H1 (cell line): ENCODE measurements at regions of chr10 and their contacts with region 1.

Region 1: GRCh38 chr10:132023092-132023811 is 41.5 kb upstream of the BNIP3 start:
- DNase-seq: peak; percentile 73 to 94
- H3K4me3 ChIP-seq: no peak overlapping the region
- H3K27ac ChIP-seq: no peak overlapping the region
- H3K4me1 ChIP-seq: peaks cover 2 to 8% (median 3%) of the 10 kb centered on the region in 4 experiments; a peak in 5 of 7 replicates
- H3K27me3 ChIP-seq: peaks cover 0 to 8% (median 1%) of the 10 kb centered on the region in 4 experiments; a peak in 3 of 7 replicates
- CTCF ChIP-seq: peak; percentile 85 to 93 (median 89)
- EP300 ChIP-seq: no peak
- POLR2A ChIP-seq: no peak
- RAD21 ChIP-seq: peak; percentile 93 to 95

Region 2: DNA sequence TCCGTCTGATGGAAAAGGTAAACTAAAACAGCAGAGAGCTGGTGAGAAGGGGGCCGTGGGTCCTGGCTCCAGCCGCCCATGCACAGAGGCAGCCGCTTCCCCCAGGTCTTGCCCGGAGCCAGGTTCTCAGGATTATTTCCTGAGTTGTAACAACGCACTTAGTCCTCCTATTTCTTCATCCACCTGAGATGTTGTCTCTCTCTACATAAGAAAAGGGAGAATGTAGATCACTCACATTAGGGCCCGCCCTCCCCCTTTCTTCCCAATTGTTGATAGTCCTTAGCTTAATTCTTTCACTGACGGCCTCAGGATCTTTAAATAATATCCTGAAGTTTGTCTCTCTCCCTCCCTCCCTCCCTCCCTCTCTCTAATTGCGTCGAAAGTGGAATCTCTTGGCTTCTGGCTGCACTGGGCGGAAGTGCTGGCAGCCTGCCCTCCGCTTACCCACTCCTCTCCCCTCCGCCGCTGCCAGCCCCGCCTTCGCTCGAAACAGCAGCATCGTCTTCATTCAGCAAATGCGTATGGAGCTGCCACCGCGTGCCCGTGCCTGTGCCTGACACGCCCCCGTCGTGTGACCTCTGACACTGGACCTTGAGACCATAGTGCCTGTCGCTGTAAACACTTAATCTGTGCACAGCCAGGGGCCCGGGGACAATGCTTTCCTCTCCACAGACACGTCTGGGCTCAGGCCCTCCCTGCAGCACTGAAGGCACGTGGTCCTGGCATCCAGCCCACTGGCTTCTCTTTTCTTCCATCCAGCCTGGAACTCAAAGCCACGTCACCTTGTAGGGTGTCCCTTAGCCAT is 297.0 kb before region 1 on chr10:
- CTCF ChIA-PET with region 1: no interaction called
- POLR2A ChIA-PET with region 1: no interaction called
- DNase-seq: no peak
- H3K4me3 ChIP-seq: no peak overlapping the region
- H3K27ac ChIP-seq: no peak overlapping the region
- H3K4me1 ChIP-seq: peaks cover 0 to 25% (median 10%) of the 10 kb centered on the region in 4 experiments; a peak in 6 of 7 replicates
- H3K27me3 ChIP-seq: peaks cover 0 to 13% (median 9%) of the 10 kb centered on the region in 4 experiments; a peak in 4 of 7 replicates
- CTCF ChIP-seq: no peak
- EP300 ChIP-seq: no peak
- POLR2A ChIP-seq: no peak
- RAD21 ChIP-seq: no peak

Region 3: DNA sequence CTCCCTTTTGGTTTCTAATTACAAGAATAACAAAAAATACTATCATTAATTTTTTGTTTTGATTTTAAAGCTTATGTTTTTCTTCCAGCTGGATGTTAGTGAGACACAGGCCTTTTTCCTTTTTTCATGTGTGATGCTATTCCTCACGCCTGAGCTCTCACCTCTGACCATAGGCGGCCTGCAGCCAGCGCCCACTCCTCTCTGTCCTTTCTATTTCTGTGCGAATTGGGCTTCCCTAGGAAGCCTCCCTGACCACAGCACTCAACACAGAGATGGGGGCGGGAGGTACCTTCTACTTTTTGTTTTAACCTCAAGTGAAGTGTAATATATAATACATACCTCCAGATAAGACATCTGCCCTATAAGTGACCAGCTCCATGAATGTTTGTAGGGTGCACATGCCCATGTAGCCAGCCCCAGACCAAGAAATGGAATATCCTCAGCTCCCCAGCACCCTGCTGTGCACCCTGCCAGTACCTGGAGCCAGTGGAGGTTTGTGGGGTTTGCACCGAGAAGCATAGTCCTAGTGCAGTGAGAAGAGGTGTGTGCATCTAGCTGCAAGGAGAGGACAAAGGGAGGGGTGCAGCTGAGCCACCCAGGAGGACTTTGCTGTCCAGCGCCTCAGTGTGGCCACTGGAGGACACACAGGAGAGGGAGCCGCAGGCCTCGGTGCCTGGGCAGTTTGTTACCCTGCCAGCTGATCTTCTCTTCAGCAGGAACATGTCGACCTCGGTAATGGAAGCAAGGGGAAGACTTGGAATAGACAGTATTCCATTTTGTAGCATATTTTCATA is 80.0 kb before region 1 on chr10:
- CTCF ChIA-PET with region 1: interaction called, 28 read pairs
- POLR2A ChIA-PET with region 1: no interaction called
- DNase-seq: peak; percentile 29 to 66
- H3K4me3 ChIP-seq: no peak overlapping the region
- H3K27ac ChIP-seq: no peak overlapping the region
- H3K4me1 ChIP-seq: no peaks in the 10 kb centered on the region; a peak in 2 of 7 replicates
- H3K27me3 ChIP-seq: no peaks in the 10 kb centered on the region
- CTCF ChIP-seq: peak; percentile 82 to 93 (median 90)
- EP300 ChIP-seq: no peak
- POLR2A ChIP-seq: no peak
- RAD21 ChIP-seq: peak; percentile 70 to 75

Region 4: DNA sequence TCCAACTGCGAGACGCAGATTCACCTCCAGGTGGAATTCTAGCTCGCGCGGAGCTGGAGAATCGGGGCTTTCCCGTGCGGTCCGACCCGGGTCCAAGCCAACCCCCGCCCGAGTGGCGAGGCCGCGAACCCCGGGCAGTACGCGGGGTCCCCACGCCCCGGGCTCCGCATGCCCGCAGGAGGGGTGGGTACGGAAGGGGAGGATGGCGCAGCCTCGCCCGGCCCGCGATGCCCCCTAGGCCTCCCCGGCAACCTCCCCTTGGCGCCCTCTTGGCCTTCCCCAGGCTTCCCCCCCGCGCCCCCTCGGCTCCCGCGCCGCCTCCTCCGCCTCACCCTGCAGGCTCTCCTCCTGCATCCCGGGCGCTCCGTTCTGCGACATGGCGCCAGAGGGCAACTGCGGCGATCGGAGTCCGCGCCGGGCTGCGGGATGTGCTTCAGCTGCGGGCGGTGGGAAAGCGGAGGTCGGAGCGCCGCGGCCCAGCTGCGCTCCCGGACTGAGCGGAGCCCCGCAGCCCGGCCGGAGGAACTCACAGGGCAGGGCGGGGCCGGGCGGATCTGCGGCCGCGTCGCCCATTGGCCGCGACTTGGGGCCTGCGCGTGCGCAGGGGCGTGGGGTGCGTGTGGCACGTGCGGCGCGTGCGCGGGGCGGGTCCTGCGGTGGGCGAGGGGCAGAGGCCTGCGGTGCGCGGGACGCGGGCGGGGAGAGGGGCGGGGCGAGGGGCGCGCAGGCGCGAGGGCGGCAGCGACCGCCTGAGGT is 41.6 kb before region 1 on chr10 and contains the start of gene BNIP3:
- CTCF ChIA-PET with region 1: interaction called, 15 read pairs
- POLR2A ChIA-PET with region 1: interaction called, 4 read pairs
- DNase-seq: peak; percentile 65 to 91
- H3K4me3 ChIP-seq: peak within 1 kb of the TSS; percentile 56 to 71 (median 64)
- H3K27ac ChIP-seq: no peak within 1 kb of the TSS
- H3K4me1 ChIP-seq: peaks cover 12 to 16% (median 13%) of the 10 kb centered on the region in 4 experiments
- H3K27me3 ChIP-seq: peaks cover 8 to 29% (median 24%) of the 10 kb centered on the region in 4 experiments
- CTCF ChIP-seq: no peak
- EP300 ChIP-seq: no peak
- POLR2A ChIP-seq: no peak
- RAD21 ChIP-seq: no peak
- total RNA-seq, gene BNIP3: 25.8 and 26.4 TPM in 2 replicates

Region 5: DNA sequence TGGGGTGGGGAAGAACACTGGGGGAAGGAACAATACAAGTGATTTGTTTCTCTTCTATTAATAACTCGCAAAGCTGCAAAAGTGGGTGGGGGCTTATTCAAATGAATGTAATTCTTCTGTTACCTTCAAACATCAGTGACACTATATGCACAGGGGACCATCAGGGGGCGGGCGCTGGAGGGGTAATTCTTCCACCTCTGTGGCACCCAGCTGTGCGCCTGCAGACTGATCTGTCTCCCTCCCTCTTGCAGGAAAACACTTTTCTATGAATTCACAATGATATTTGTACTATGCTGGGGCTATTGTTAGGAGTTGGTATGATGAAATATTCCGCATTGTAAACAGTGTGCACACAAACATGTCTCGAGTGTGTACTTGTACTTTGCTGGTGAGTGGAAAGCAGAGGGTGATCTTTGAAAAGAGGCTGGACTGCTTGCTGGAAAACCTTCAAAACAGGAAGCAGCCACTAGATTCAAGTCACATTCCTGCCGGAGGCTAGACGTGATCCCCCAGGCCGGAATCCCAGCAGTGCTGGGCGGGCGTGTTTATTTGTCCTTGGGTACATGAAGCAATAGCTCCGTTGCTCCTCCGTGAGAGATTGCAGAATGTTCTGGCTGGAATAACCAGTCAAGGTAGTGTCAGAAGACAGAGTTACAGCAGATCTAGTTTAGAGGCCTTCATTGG is 25.7 kb before region 1 on chr10:
- CTCF ChIA-PET with region 1: interaction called, 86 read pairs
- POLR2A ChIA-PET with region 1: interaction called, 6 read pairs
- DNase-seq: peak in 1 of 2 experiments; percentile 55
- H3K4me3 ChIP-seq: peak overlapping the region in 1 of 4 experiments; percentile 10; a peak in 1 of 8 replicates
- H3K27ac ChIP-seq: no peak overlapping the region
- H3K4me1 ChIP-seq: peaks cover 6 to 17% (median 10%) of the 10 kb centered on the region in 4 experiments; a peak in 5 of 7 replicates
- H3K27me3 ChIP-seq: no peaks in the 10 kb centered on the region
- CTCF ChIP-seq: no peak
- EP300 ChIP-seq: no peak
- POLR2A ChIP-seq: no peak
- RAD21 ChIP-seq: no peak

Region 6: GRCh38 chr10:132133005-132133404 is 109.8 kb after region 1 on chr10:
- CTCF ChIA-PET with region 1: interaction called, 11 read pairs
- POLR2A ChIA-PET with region 1: no interaction called
- DNase-seq: no peak
- H3K4me3 ChIP-seq: no peak overlapping the region
- H3K27ac ChIP-seq: no peak overlapping the region
- H3K4me1 ChIP-seq: peaks cover 0 to 3% (median 0%) of the 10 kb centered on the region in 4 experiments; a peak in 1 of 7 replicates
- H3K27me3 ChIP-seq: no peaks in the 10 kb centered on the region; a peak in 1 of 7 replicates
- CTCF ChIP-seq: no peak
- EP300 ChIP-seq: no peak
- POLR2A ChIP-seq: no peak
- RAD21 ChIP-seq: no peak